ENCODE measurements at regions of chr3 and their contacts with region 1.

Region 1: GRCh38 chr3:128226795-128227395 is 73.6 kb downstream of the EEFSEC start:
- DNase-seq: no peak
- ATAC-seq: no peak
- H3K4me3 Mint-ChIP-seq: no peak overlapping the region
- H3K27ac Mint-ChIP-seq: no peak overlapping the region
- H3K4me1 Mint-ChIP-seq: no peaks in the 10 kb centered on the region
- H3K27me3 Mint-ChIP-seq: no peaks in the 10 kb centered on the region
- CTCF ChIP-seq: no peak

Region 2: GRCh38 chr3:128482666-128483656 is 256.1 kb after region 1 on chr3:
- CTCF ChIA-PET with region 1: no interaction called
- POLR2A ChIA-PET with region 1: no interaction called
- intact Hi-C with region 1: no loop called
- DNase-seq: no peak
- ATAC-seq: no peak
- H3K4me3 Mint-ChIP-seq: peak overlapping the region; percentile 68
- H3K27ac Mint-ChIP-seq: no peak overlapping the region
- H3K4me1 Mint-ChIP-seq: peaks cover 29% of the 10 kb centered on the region
- H3K27me3 Mint-ChIP-seq: peaks cover 75% of the 10 kb centered on the region
- CTCF ChIP-seq: no peak

Region 3: GRCh38 chr3:128497387-128498126 is 270.7 kb after region 1 on chr3:
- CTCF ChIA-PET with region 1: no interaction called
- POLR2A ChIA-PET with region 1: no interaction called
- intact Hi-C with region 1: loop called (anchors 2 kb)
- DNase-seq: peak; percentile 62
- ATAC-seq: peak; percentile 52
- H3K4me3 Mint-ChIP-seq: peak overlapping the region; percentile 74
- H3K27ac Mint-ChIP-seq: no peak overlapping the region
- H3K4me1 Mint-ChIP-seq: peaks cover 9% of the 10 kb centered on the region
- H3K27me3 Mint-ChIP-seq: peaks cover 60% of the 10 kb centered on the region
- CTCF ChIP-seq: no peak

Measured in activated B cell treated with CpG ODN at 0.5 μM for 24 hours (primary cell).